GM10248 (cell line): ENCODE measurements at regions of chr21 and their contacts with region 1.

Region 1: GRCh38 chr21:42524349-42525151 is 10.9 kb downstream of the SLC37A1 start:
- DNase-seq: peak; percentile 80
- CTCF ChIP-seq: no peak

Region 2: DNA sequence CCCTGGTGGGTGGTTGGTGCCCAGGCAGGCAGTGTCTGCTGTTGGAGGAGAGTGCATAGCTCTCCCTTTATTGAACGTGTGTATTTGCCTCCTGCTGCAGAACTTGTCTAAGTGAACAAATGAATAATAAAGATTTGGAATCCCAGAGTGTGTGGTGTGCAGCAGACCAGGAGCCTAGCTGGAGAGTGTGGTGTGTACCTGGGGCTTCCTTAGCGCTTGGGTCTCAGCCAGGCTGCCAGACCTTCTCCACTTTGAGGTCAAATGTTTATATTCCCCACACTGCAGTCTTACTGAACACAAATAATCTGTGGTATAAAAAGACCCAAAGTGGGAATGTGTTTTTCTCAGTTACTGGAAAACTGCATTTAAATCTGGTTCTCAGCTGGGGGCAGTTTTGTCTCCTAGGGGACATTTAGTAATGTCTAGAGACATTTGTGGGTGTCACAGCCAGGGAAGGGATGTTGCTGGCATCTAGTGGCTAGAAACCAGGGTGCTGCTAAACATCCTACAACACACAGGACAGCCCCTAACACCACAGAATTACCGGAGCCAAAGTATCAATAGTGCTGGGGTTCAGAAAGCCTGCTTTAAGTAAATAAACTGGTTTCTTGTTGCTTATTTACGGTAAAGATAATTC is 12.7 kb after region 1 on chr21:
- CTCF ChIA-PET with region 1: interaction called, 19 read pairs
- POLR2A ChIA-PET with region 1: interaction called, 3 read pairs
- DNase-seq: no peak
- CTCF ChIP-seq: peak; percentile 55